Panc1 (cell line): ENCODE measurements at regions of chr11 and their contacts with region 1.

Region 1: DNA sequence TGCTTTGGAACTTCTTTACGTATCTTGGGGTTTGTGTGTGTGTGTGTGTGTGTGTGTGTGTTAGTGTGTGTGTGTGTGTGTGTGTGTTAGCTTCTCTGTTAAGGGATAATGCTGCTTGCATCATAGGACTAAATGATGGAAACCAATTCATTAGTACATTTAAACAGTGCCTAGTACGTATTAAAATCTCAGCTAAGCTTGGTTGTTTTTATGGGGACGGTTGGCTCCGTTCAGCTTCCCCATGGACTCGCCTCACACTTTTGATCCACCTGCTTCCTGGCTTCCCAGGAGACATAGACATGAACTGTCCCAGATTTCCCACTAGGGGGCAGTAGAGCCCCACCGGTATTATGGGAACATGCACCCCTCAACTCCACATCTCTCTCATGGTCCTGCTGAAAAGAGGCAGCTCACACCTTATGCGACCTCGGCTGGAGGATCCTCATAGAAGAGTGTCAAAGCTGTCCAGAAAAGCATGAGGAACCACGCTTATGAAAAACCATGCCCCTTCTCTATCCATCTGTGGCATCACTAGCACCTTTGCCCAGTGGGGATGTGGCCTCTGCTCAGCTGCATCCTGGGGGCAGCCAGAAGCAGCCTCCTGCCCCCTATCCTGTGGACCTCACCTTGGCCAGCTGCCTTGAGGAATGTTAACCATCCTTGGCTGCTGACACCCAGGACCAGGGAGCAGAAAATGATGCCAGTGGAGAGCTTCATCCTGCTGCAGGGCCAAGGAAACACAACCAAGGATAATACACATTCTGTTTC is 9.7 kb upstream of the SAAL1 start:
- DNase-seq: peak; percentile 61
- ATAC-seq: peak; percentile 97
- H3K4me3 ChIP-seq: no peak overlapping the region
- H3K27ac ChIP-seq: no peak overlapping the region
- H3K4me1 ChIP-seq: 0 out of 2 replicates have a peak, but pooled peaks cover 5% of the 10 kb centered on the region
- H3K27me3 ChIP-seq: peaks cover 11% of the 10 kb centered on the region
- CTCF ChIP-seq: peak; percentile 92

Region 2: GRCh38 chr11:18063084-18063483 is 52.5 kb before region 1 on chr11:
- CTCF ChIA-PET with region 1: no interaction called
- POLR2A ChIA-PET with region 1: no interaction called
- in situ Hi-C with region 1: no loop called
- intact Hi-C with region 1: no loop called
- DNase-seq: no peak
- ATAC-seq: no peak
- H3K4me3 ChIP-seq: no peak overlapping the region
- H3K27ac ChIP-seq: no peak overlapping the region
- H3K4me1 ChIP-seq: no peaks in the 10 kb centered on the region
- H3K27me3 ChIP-seq: no peaks in the 10 kb centered on the region
- CTCF ChIP-seq: no peak

Region 3: GRCh38 chr11:18203723-18204122 is 88.2 kb after region 1 on chr11:
- CTCF ChIA-PET with region 1: interaction called, 22 read pairs
- POLR2A ChIA-PET with region 1: no interaction called
- in situ Hi-C with region 1: no loop called
- intact Hi-C with region 1: loop called (anchors 5 kb)
- DNase-seq: no peak
- ATAC-seq: peak; percentile 88
- H3K4me3 ChIP-seq: no peak overlapping the region
- H3K27ac ChIP-seq: no peak overlapping the region
- H3K4me1 ChIP-seq: no peaks in the 10 kb centered on the region
- H3K27me3 ChIP-seq: no peaks in the 10 kb centered on the region; the same call in 1 of the 2 replicates
- CTCF ChIP-seq: peak; percentile 72

Region 4: GRCh38 chr11:18304745-18305144 is 189.2 kb after region 1 on chr11:
- CTCF ChIA-PET with region 1: interaction called, 14 read pairs
- POLR2A ChIA-PET with region 1: no interaction called
- in situ Hi-C with region 1: no loop called
- intact Hi-C with region 1: no loop called
- DNase-seq: no peak
- ATAC-seq: no peak
- H3K4me3 ChIP-seq: no peak overlapping the region
- H3K27ac ChIP-seq: no peak overlapping the region
- H3K4me1 ChIP-seq: no peaks in the 10 kb centered on the region
- H3K27me3 ChIP-seq: no peaks in the 10 kb centered on the region
- CTCF ChIP-seq: no peak

Region 5: GRCh38 chr11:18599739-18600230 is 484.2 kb after region 1 on chr11 and contains the start of gene MISFA:
- CTCF ChIA-PET with region 1: interaction called, 11 read pairs
- POLR2A ChIA-PET with region 1: no interaction called
- in situ Hi-C with region 1: no loop called
- intact Hi-C with region 1: no loop called
- DNase-seq: no peak
- ATAC-seq: no peak
- H3K4me3 ChIP-seq: no peak within 1 kb of the TSS
- H3K27ac ChIP-seq: no peak within 1 kb of the TSS
- H3K4me1 ChIP-seq: no peaks in the 10 kb centered on the region
- H3K27me3 ChIP-seq: no peaks in the 10 kb centered on the region
- CTCF ChIP-seq: no peak
- total RNA-seq, gene MISFA: 5.0 TPM